ENCODE measurements at regions of chr6 and their contacts with region 1.

Region 1: DNA sequence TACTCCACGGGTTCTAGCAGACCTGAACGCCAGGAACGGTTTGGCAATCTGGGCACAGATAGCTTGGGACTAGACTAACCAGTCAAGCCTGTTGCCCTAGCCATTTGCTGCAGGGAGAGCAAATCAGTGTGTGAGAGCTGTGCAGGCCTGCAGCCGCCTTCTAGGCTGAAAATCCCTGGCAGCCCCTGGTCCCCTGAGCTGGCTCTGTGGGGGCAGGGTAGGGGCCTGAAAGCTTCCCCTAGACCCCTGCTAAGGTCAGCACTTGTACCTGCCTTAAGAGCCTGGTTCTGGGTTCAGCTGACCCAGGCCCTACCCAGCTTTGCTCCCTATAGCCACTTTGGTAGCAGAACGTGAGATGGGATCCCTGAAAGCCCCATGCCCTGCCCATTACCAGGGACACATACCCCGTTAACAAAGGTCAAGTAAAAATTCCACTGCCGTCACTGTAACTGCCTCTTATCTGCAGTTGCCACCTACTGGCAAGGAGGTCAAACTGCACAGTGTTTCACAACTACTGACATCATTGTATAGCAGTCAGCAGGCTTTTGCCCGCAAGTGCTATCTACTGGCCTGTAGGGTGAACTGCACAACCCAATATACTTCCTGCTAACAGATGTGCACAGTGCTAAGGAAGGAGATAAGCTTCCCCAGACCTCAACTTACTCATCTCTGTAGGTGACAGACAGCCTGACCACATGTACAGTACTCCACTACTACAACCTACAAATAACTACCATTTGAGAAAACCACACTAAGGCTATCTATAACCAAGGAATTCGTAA is 95.1 kb upstream of the OLIG3 start:
- H3K4me3 ChIP-seq: no peak overlapping the region
- H3K27ac ChIP-seq: no peak overlapping the region
- H3K4me1 ChIP-seq: no peaks in the 10 kb centered on the region
- CTCF ChIP-seq: 0 out of 2 replicates have a peak, but pooled peaks have one; percentile 19

Region 2: DNA sequence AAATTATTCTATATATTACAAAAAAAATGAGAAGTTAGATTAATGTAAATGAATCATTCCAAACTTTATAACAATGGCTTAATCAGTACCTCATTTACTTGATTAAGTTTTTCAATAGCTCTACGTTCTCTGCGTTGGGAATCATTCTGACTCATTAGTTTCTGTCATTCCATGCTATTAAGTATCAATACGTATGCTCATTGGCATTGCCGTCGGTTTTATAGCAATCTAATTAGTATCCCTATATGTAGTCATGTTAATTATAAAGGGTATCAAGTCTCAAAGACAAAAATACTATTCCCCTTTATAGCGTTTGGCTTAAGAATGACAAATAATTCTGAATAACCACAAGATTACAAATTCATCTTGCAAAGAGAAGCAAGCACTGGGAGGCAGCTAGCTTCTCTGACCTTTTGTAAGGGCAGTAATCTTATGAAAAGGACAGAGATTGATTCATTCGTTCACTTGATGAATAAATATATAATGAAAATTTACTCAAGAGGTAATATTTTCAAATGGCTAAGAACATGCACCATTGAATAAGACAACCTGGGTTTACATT is 136.8 kb before region 1 on chr6:
- CTCF ChIA-PET with region 1: no interaction called
- POLR2A ChIA-PET with region 1: no interaction called
- H3K4me3 ChIP-seq: no peak overlapping the region
- H3K27ac ChIP-seq: no peak overlapping the region
- H3K4me1 ChIP-seq: no peaks in the 10 kb centered on the region
- CTCF ChIP-seq: no peak

Region 3: GRCh38 chr6:137571854-137572253 is 17.4 kb before region 1 on chr6:
- CTCF ChIA-PET with region 1: interaction called, 14 read pairs
- POLR2A ChIA-PET with region 1: no interaction called
- H3K4me3 ChIP-seq: no peak overlapping the region
- H3K27ac ChIP-seq: no peak overlapping the region
- H3K4me1 ChIP-seq: peaks cover 20% of the 10 kb centered on the region
- CTCF ChIP-seq: no peak

Region 4: DNA sequence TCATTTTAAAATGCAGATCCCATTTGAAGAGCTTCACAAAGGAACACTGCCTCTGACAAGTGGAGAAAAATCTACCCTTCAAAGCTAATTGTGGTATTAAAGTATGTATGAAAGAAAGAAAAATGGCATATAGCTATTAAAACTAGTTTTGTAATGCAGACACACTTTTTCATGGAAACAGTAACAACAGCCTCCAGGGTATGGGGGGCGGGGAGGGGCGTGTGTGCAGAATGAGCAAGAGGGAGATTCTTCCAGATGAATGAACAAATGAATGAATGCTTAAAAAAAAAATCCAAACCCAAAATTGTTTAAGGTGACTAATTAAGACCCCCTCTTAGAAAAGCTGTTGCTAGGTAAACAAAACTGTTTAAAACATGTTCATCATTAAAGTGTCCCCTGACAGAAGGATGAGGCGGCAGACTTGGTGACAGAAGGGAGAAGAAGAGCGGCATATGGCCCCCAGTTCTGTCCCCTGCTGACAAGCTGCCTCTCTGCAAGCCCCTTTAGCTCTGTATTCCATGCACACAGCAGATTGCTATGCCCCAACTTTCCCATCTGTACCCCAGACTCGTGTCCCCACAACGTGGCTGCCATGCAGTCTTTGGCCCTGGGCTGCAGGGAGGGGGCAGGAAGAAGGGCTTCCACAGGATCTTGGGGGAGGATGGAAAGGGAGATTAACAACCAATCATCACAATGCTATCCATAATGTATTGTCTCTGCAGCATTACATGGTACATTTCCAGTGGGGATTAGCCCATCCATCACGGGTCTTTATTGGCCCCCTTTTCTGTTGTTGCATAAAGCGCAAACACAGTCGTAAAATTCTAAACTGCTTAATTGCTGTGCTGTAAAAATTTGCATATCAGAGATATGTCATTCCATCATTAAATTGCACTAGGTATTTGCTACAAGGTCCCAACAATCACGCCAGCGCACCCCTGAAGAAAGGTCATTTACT is 13.3 kb after region 1 on chr6:
- CTCF ChIA-PET with region 1: interaction called, 11 read pairs
- POLR2A ChIA-PET with region 1: no interaction called
- H3K4me3 ChIP-seq: no peak overlapping the region
- H3K27ac ChIP-seq: no peak overlapping the region
- H3K4me1 ChIP-seq: peaks cover 9% of the 10 kb centered on the region
- CTCF ChIP-seq: no peak

Region 5: GRCh38 chr6:137610702-137611101 is 21.4 kb after region 1 on chr6:
- CTCF ChIA-PET with region 1: interaction called, 16 read pairs
- POLR2A ChIA-PET with region 1: no interaction called
- H3K4me3 ChIP-seq: no peak overlapping the region
- H3K27ac ChIP-seq: no peak overlapping the region
- H3K4me1 ChIP-seq: no peaks in the 10 kb centered on the region
- CTCF ChIP-seq: no peak

Region 6: DNA sequence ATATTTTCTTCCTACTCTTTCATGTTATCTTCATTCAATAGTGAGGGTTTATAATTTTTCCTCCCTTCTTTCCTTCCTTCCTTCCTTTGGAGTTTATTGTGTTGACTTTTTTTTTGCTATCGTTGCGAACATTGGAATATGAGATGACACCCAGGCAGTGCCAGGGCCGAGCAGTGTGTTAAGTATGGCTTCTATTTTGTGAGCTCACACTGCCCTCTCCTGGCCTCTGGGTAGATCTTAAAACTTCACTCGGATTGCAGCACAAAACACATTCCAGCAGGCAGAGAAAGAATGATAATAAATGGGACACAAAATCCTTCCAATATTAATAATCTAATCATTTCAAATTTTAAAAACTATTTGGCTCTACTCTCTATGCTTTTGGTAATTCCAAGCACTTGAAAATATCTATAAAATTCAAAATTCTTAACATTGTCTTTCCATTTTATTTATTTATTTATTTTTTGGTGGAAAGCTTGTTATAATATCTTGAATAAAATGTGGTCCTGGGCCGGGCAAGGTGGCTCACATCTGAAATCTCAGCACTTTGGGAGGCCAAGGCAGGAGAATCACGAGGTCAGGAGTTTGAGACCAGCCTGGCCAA is 52.3 kb after region 1 on chr6:
- CTCF ChIA-PET with region 1: no interaction called
- POLR2A ChIA-PET with region 1: no interaction called
- H3K4me3 ChIP-seq: no peak overlapping the region
- H3K27ac ChIP-seq: no peak overlapping the region
- H3K4me1 ChIP-seq: no peaks in the 10 kb centered on the region; the same call in 1 of the 2 replicates
- CTCF ChIP-seq: peak; percentile 54

Region 7: DNA sequence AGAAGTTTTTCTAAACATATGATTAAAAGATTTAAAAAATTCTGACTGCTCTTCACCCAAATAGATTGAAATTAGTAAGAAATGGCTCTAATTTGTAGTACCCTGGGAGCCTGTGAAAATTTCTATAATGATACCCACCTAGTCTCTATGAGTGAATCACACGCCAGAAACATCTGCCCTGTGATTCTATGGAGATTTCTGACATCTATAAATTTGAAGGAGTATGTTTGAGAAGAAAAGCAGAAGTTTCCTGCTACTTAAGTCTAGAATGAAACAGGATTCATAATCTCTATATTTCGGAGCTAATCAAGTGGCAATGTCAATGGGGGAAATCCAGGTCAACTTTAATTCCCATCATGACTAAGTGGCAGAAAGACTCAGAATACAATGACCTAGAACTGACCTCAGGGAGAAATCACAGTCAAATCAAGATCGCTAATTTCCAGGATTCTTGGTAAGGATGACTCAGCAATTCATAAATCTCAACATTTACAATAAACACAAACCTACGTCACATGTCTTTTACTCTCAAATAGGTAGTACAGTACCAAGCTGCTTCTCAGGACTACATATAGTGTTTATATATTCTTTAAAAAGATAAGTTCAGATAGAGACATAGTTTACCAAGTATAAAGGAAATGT is 91.6 kb after region 1 on chr6:
- CTCF ChIA-PET with region 1: no interaction called
- POLR2A ChIA-PET with region 1: no interaction called
- H3K4me3 ChIP-seq: no peak overlapping the region
- H3K27ac ChIP-seq: no peak overlapping the region
- H3K4me1 ChIP-seq: no peaks in the 10 kb centered on the region
- CTCF ChIP-seq: no peak

Measured in HEK293 (cell line).